GM23248 (cell line): ENCODE measurements at regions of chr20 and their contacts with region 1.

Region 1: GRCh38 chr20:36199345-36200257 is 36.7 kb upstream of the AAR2 start:
- DNase-seq: peak; percentile 71
- H3K4me3 ChIP-seq: no peak overlapping the region
- H3K27ac ChIP-seq: no peak overlapping the region
- H3K4me1 ChIP-seq: no peaks in the 10 kb centered on the region
- H3K27me3 ChIP-seq: no peaks in the 10 kb centered on the region

Region 2: DNA sequence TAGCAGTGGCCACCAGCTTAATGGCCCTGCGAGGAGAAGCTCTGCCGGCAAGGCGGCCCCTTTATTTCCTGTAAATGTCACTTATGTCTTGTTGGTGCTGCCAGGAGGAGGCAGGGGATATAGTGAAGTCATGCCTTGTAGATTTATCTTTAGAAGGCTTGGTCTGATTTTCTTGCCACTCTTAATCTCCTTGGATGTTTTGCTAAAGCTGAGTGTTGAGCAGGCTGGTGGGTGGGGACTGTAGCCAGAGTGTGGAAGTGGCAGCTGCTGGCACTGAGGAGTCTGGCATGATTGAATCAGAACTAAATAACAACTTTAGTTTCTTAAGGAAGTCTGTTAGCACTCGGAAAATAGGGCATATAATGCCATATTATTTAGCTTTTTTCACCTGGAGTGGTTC is 349.9 kb before region 1 on chr20:
- in situ Hi-C with region 1: no loop called
- DNase-seq: peak; percentile 39
- H3K4me3 ChIP-seq: no peak overlapping the region
- H3K27ac ChIP-seq: no peak overlapping the region
- H3K4me1 ChIP-seq: peaks cover 6% of the 10 kb centered on the region
- H3K27me3 ChIP-seq: no peaks in the 10 kb centered on the region

Region 3: GRCh38 chr20:36439040-36439730 is 239.6 kb after region 1 on chr20:
- in situ Hi-C with region 1: loop called (anchors 10 kb)
- DNase-seq: peak; percentile 70
- H3K4me3 ChIP-seq: no peak overlapping the region
- H3K27ac ChIP-seq: no peak overlapping the region
- H3K4me1 ChIP-seq: no peaks in the 10 kb centered on the region
- H3K27me3 ChIP-seq: 0 out of 2 replicates have a peak, but pooled peaks cover 1% of the 10 kb centered on the region